ENCODE measurements at regions of chr14 and their contacts with region 1.

Region 1: GRCh38 chr14:77028384-77029231 is at the start of gene IRF2BPL:
- DNase-seq: peak; percentile 97
- ATAC-seq: peak; percentile 67
- H3K4me3 Mint-ChIP-seq: peak within 1 kb of the TSS; percentile 88
- H3K27ac Mint-ChIP-seq: peak within 1 kb of the TSS; percentile 97
- H3K4me1 Mint-ChIP-seq: peaks cover 54% of the 10 kb centered on the region
- H3K27me3 Mint-ChIP-seq: no peaks in the 10 kb centered on the region
- total RNA-seq, gene IRF2BPL: 34.3 to 40.1 TPM

Region 2: GRCh38 chr14:76151398-76152339 is 876.9 kb before region 1 on chr14 and contains the start of gene GPATCH2L:
- CTCF ChIA-PET with region 1: no interaction called
- POLR2A ChIA-PET with region 1: no interaction called
- intact Hi-C with region 1: loop called in 1 of 2 experiments (anchors 10 kb)
- DNase-seq: peak; percentile 98
- ATAC-seq: peak; percentile 92
- H3K4me3 Mint-ChIP-seq: peak within 1 kb of the TSS; percentile 92
- H3K27ac Mint-ChIP-seq: peak within 1 kb of the TSS; percentile 95
- H3K4me1 Mint-ChIP-seq: peaks cover 46% of the 10 kb centered on the region
- H3K27me3 Mint-ChIP-seq: no peaks in the 10 kb centered on the region
- total RNA-seq, gene GPATCH2L: 43.0 to 47.2 TPM

Region 3: GRCh38 chr14:76947078-76947837 is 81.3 kb before region 1 on chr14:
- CTCF ChIA-PET with region 1: interaction called, 7 read pairs
- POLR2A ChIA-PET with region 1: no interaction called
- intact Hi-C with region 1: loop called in 1 of 2 experiments (anchors 1 kb)
- DNase-seq: peak; percentile 92
- ATAC-seq: peak; percentile 81
- H3K4me3 Mint-ChIP-seq: peak overlapping the region; percentile 3
- H3K27ac Mint-ChIP-seq: peak overlapping the region; percentile 81
- H3K4me1 Mint-ChIP-seq: peaks cover 56% of the 10 kb centered on the region
- H3K27me3 Mint-ChIP-seq: no peaks in the 10 kb centered on the region

Region 4: DNA sequence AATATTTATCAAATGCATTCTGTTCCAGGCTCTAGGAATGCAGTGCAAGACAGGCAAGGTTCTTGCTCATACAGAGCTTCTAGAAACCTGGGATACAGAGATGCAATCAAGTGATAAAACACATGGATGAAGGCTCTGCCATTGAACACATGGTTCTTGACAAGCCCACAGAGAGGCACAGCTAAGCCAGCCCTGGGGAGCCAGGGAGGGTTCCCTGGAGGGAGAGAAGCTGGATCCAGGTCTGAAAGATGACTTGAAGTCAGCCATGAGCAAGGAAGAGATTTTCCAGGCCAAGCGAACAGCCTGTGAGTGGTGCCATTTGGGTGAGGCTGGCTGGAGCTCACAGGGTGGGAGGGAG is 66.3 kb before region 1 on chr14:
- CTCF ChIA-PET with region 1: interaction called, 8 read pairs
- POLR2A ChIA-PET with region 1: interaction called, 12 read pairs
- intact Hi-C with region 1: loop called (anchors 1 kb)
- DNase-seq: no peak
- ATAC-seq: peak; percentile 15
- H3K4me3 Mint-ChIP-seq: peak overlapping the region; percentile 62
- H3K27ac Mint-ChIP-seq: peak overlapping the region; percentile 99
- H3K4me1 Mint-ChIP-seq: peaks cover 86% of the 10 kb centered on the region
- H3K27me3 Mint-ChIP-seq: no peaks in the 10 kb centered on the region

Region 5: DNA sequence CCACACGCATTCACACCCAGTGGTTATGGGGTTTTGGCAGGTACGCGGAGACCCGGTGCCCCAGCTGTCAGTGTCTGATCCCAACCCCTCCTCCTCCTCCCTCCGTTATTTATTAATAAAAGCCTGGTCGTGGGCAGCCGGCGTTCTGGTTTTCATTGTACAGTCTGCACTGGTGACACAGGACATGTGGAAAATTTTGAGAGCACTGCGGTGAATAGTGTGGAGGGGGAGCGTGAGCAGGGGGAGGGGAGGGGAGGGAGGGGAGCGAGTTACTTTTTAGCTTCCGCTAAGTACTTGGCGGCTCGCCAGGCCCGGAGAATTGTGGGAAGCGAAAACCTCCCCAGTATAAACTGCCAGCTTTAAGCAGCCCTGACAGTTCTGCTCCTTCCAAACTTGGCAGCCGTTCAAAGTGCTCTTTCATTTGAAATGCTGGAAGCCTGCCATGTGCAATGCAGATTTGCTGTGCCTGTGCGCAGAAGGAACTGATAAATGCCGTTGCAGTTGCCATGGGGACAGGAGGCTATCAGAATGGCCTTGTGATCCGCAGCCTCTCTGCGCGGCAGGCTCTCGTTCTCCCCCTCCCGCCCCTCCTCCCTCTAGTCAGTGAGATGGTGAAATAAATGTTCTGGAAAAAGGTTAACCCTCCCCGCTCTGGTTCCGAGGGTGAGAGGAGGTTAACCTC is 11.6 kb after region 1 on chr14:
- CTCF ChIA-PET with region 1: interaction called, 15 read pairs
- POLR2A ChIA-PET with region 1: interaction called, 14 read pairs
- intact Hi-C with region 1: loop called (anchors 1 kb)
- DNase-seq: peak; percentile 98
- ATAC-seq: peak; percentile 66
- H3K4me3 Mint-ChIP-seq: peak overlapping the region; percentile 63
- H3K27ac Mint-ChIP-seq: peak overlapping the region; percentile 93
- H3K4me1 Mint-ChIP-seq: peaks cover 89% of the 10 kb centered on the region
- H3K27me3 Mint-ChIP-seq: no peaks in the 10 kb centered on the region

Region 6: DNA sequence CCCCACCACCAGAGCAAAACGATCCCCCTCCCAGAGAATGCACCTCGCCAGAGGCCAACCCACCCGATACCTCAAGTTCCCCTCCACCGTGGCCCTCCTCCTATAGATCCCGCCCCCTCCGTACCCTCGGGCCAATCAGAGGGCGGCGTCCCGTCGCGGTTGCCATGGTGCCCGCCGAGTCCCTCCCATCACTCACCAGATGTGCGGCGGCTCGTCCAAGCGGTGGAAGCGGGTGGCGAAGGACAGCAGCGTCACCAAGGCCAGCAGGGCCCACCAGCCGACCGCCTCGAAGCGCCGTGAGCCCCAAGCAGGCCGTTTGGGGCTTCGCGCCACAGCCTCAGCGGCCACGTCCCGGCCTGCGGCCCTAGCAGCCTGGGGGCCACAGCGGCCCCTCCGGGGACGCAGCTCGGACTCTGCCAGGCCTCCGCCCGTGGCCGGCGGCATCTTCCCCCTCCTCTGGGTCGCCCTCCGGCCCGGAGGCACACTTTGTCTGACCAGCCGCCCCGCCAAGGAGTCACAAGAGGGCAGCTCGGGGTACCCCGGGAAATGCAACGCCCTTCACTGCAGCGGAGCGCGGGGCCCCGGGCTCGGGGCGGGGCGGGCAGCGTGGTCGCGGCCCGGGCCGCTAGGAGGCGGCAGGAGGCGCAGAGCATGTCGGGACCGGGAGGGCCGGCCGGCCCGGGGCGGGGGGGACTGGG is 291.8 kb after region 1 on chr14 and contains the start of gene POMT2:
- CTCF ChIA-PET with region 1: no interaction called
- POLR2A ChIA-PET with region 1: no interaction called
- intact Hi-C with region 1: loop called in 1 of 2 experiments (anchors 2 kb)
- DNase-seq: peak; percentile 95
- ATAC-seq: peak; percentile 53
- H3K4me3 Mint-ChIP-seq: peak within 1 kb of the TSS; percentile 92
- H3K27ac Mint-ChIP-seq: peak within 1 kb of the TSS; percentile 99
- H3K4me1 Mint-ChIP-seq: peaks cover 19% of the 10 kb centered on the region
- H3K27me3 Mint-ChIP-seq: no peaks in the 10 kb centered on the region
- total RNA-seq, gene POMT2: 11.7 to 18.2 TPM

Measured in activated CD4-positive, alpha-beta T cell treated with anti-CD3 and anti-CD28 coated beads for 36 hours (primary cell).